ENCODE measurements at regions of chr9 and their contacts with region 1.

Region 1: GRCh38 chr9:6055213-6055612 is 39.8 kb upstream of the RANBP6 start:
- DNase-seq: no peak
- H3K4me3 ChIP-seq: no peak overlapping the region
- H3K27ac ChIP-seq: no peak overlapping the region
- H3K4me1 ChIP-seq: no peaks in the 10 kb centered on the region
- H3K27me3 ChIP-seq: no peaks in the 10 kb centered on the region
- CTCF ChIP-seq: peak; percentile 69
- EP300 ChIP-seq: no peak
- RAD21 ChIP-seq: peak; percentile 73

Region 2: DNA sequence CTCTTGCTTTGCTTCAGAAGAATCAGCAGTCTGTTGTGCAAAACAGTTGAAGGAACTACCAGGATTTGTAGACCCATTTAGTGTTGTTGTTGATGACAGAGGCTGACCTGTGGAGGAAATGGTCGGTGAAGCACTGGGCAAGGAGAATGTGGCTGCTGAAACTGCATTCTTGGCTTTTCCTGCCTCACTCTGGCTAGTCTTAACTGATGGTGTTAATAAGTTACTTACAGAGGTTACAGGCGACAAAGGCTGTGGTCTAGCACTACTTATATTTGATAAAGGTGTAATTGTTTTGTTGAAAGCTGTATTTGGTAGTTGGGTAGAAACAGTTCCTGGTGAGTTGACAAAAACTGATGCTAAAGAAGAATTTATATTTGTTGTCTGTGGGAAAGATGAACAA is 133.0 kb before region 1 on chr9:
- CTCF ChIA-PET with region 1: no interaction called
- POLR2A ChIA-PET with region 1: no interaction called
- DNase-seq: no peak
- H3K4me3 ChIP-seq: no peak overlapping the region
- H3K27ac ChIP-seq: no peak overlapping the region
- H3K4me1 ChIP-seq: no peaks in the 10 kb centered on the region
- H3K27me3 ChIP-seq: no peaks in the 10 kb centered on the region
- CTCF ChIP-seq: no peak
- EP300 ChIP-seq: no peak
- RAD21 ChIP-seq: no peak

Region 3: GRCh38 chr9:6024020-6024554 is 31.1 kb before region 1 on chr9:
- CTCF ChIA-PET with region 1: interaction called, 17 read pairs
- POLR2A ChIA-PET with region 1: no interaction called
- DNase-seq: peak; percentile 28
- H3K4me3 ChIP-seq: 0 out of 4 replicates have a peak overlapping the region, but pooled peaks have one; percentile 7 to 40
- H3K27ac ChIP-seq: no peak overlapping the region
- H3K4me1 ChIP-seq: no peaks in the 10 kb centered on the region; a peak in 1 of 4 replicates
- H3K27me3 ChIP-seq: no peaks in the 10 kb centered on the region; the same call in 1 of the 2 replicates
- CTCF ChIP-seq: peak; percentile 60
- EP300 ChIP-seq: no peak
- RAD21 ChIP-seq: no peak

Region 4: DNA sequence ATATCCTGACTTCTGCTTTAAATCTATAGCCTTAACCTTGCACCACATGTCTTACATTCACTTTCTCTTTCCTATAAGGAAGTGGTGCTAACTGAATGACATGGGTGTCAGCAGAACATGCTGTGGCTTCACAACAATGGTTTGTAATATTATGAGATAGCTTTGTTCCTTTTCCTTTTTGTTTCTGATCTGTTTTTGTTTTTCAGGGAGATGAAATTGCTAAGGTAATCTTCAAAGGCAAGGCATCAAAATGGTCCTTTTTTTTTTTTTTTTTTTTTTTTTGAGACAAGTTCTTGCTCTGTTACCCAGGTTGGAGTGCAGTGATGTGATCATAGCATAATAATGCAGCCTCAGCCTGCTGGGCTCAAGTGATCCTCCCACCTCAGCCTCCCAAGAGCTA is 13.8 kb after region 1 on chr9:
- CTCF ChIA-PET with region 1: interaction called, 18 read pairs
- POLR2A ChIA-PET with region 1: no interaction called
- DNase-seq: no peak
- H3K4me3 ChIP-seq: no peak overlapping the region
- H3K27ac ChIP-seq: no peak overlapping the region
- H3K4me1 ChIP-seq: no peaks in the 10 kb centered on the region
- H3K27me3 ChIP-seq: no peaks in the 10 kb centered on the region
- CTCF ChIP-seq: no peak
- EP300 ChIP-seq: no peak
- RAD21 ChIP-seq: no peak

Region 5: GRCh38 chr9:6212722-6213375 is 157.6 kb after region 1 on chr9:
- CTCF ChIA-PET with region 1: no interaction called
- POLR2A ChIA-PET with region 1: no interaction called
- DNase-seq: no peak
- H3K4me3 ChIP-seq: no peak overlapping the region
- H3K27ac ChIP-seq: no peak overlapping the region
- H3K4me1 ChIP-seq: peaks cover 0 to 14% of the 10 kb centered on the region in 2 experiments; a peak in 1 of 4 replicates
- H3K27me3 ChIP-seq: no peaks in the 10 kb centered on the region
- CTCF ChIP-seq: no peak
- EP300 ChIP-seq: no peak
- RAD21 ChIP-seq: no peak

Region 6: GRCh38 chr9:6305954-6306563 is 250.8 kb after region 1 on chr9:
- CTCF ChIA-PET with region 1: interaction called, 34 read pairs
- POLR2A ChIA-PET with region 1: no interaction called
- DNase-seq: peak; percentile 31
- H3K4me3 ChIP-seq: no peak overlapping the region
- H3K27ac ChIP-seq: no peak overlapping the region
- H3K4me1 ChIP-seq: no peaks in the 10 kb centered on the region
- H3K27me3 ChIP-seq: no peaks in the 10 kb centered on the region; the same call in 1 of the 2 replicates
- CTCF ChIP-seq: peak; percentile 66
- EP300 ChIP-seq: no peak
- RAD21 ChIP-seq: peak; percentile 82

Measured in SK-N-SH (cell line).